SK-N-SH (cell line): ENCODE measurements at regions of chr17 and their contacts with region 1.

Region 1: DNA sequence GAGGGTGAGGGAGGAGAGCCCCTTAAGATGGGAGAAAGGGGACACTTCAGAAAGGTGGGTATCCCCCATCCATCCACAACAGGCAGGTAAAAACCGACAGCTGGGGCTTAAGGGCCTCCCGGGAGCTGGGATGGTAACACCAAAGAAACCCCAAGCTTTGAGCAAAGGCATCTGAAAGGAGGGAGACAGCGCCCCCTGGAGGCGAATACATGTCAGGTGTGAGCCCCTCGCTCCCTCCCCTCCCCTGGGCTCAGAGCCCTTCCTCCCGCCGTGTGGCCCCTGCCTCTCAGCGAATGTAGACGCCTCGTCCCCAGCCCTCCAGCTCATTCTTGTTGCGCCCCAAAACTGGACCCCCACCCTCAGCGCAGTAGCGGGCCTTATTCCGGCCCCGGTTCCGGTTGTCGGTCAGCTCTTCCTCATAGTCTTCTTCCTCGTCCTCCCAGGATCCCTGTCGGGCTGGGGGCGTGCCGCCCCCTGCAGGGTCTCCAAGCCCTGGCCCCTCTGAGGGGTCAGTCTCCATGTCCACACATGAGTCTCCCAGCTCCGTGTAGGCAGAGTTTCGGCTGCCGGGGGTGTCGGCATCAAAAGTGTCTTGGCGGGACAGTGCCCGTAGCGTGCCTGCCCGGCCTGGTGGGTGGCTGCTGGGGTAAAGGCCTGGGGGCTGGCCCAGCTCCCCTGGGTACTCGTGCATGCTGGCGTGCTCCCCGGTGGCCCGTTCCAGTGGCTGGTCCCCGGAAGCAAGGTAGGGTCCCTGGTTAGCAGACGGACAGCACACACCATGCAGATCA is 9.1 kb upstream of the ARL5C start:
- DNase-seq: peak; percentile 93
- H3K4me3 ChIP-seq: no peak overlapping the region
- H3K27ac ChIP-seq: no peak overlapping the region
- H3K4me1 ChIP-seq: no peaks in the 10 kb centered on the region; a peak in 1 of 4 replicates
- H3K27me3 ChIP-seq: no peaks in the 10 kb centered on the region
- CTCF ChIP-seq: peak; percentile 85
- EP300 ChIP-seq: no peak
- RAD21 ChIP-seq: peak; percentile 67

Region 2: GRCh38 chr17:39134878-39135277 is 40.2 kb before region 1 on chr17:
- CTCF ChIA-PET with region 1: no interaction called
- POLR2A ChIA-PET with region 1: no interaction called
- DNase-seq: no peak
- H3K4me3 ChIP-seq: no peak overlapping the region
- H3K27ac ChIP-seq: no peak overlapping the region
- H3K4me1 ChIP-seq: peaks cover 0 to 3% of the 10 kb centered on the region in 2 experiments; a peak in 1 of 4 replicates
- H3K27me3 ChIP-seq: no peaks in the 10 kb centered on the region
- CTCF ChIP-seq: no peak
- EP300 ChIP-seq: no peak
- RAD21 ChIP-seq: no peak

Region 3: GRCh38 chr17:39164675-39165143 is 10.4 kb before region 1 on chr17:
- CTCF ChIA-PET with region 1: interaction called, 108 read pairs
- POLR2A ChIA-PET with region 1: interaction called, 6 read pairs
- DNase-seq: peak; percentile 98
- H3K4me3 ChIP-seq: peak overlapping the region; percentile 50 to 62
- H3K27ac ChIP-seq: no peak overlapping the region
- H3K4me1 ChIP-seq: peaks cover 0 to 3% of the 10 kb centered on the region in 2 experiments; a peak in 2 of 4 replicates
- H3K27me3 ChIP-seq: no peaks in the 10 kb centered on the region
- CTCF ChIP-seq: peak; percentile 78
- EP300 ChIP-seq: no peak
- RAD21 ChIP-seq: peak; percentile 35; the same call in 1 of the 2 replicates

Region 4: DNA sequence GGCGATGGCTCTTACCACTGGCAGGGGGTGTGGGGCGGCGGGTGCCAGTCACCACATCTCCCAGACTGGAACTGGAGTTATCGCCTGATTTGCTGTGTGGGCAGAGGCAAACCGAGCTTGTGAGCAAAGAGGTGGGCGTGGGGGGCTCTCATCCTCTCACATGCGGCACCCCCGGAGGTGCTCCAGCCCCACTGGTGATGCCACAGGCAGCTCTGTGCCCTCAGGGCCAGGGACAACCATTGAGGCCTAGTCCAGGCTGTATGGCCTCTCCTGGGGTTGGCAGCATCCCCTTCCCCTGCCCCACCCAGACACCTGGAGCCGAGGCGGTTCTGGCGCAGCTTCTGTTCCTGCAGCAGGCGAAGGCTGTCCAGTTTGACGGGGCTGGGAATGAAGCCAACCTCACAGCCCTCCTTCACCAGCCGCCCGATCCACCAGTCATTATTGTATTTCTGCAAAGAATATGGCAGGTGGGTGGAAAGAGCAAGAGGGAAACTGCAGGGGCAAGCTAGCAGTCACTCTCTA is 11.4 kb after region 1 on chr17:
- CTCF ChIA-PET with region 1: interaction called, 96 read pairs
- POLR2A ChIA-PET with region 1: interaction called, 3 read pairs
- DNase-seq: no peak
- H3K4me3 ChIP-seq: no peak overlapping the region
- H3K27ac ChIP-seq: no peak overlapping the region
- H3K4me1 ChIP-seq: no peaks in the 10 kb centered on the region
- H3K27me3 ChIP-seq: no peaks in the 10 kb centered on the region
- CTCF ChIP-seq: no peak
- EP300 ChIP-seq: no peak
- RAD21 ChIP-seq: no peak

Region 5: GRCh38 chr17:39199820-39200069 is 24.6 kb after region 1 on chr17:
- CTCF ChIA-PET with region 1: interaction called, 96 read pairs
- POLR2A ChIA-PET with region 1: no interaction called
- DNase-seq: peak; percentile 91
- H3K4me3 ChIP-seq: peak overlapping the region; percentile 75 to 93
- H3K27ac ChIP-seq: peak overlapping the region; percentile 94 to 99
- H3K4me1 ChIP-seq: peaks cover 25 to 42% of the 10 kb centered on the region in 2 experiments; a peak in 2 of 4 replicates
- H3K27me3 ChIP-seq: no peaks in the 10 kb centered on the region
- CTCF ChIP-seq: no peak
- EP300 ChIP-seq: no peak
- RAD21 ChIP-seq: no peak

Region 6: DNA sequence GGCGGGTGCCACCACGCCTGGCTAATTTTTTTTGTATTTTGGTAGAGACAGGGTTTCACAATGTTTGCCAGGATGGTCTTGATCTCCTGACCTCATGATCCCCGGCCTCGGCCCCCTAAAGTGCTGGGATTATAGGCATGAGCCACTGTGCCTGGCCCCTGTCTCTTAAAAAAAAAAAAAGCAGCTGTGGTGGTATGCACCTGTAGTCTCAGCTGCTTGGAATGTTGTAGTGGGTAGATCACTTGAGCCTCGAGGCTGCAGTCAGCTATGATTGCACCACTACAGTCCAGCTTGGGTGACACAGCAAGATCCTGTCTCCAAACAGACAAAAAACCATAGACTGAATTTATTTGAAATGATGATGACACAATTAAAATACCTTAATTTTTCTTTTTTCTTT is 310.5 kb after region 1 on chr17:
- CTCF ChIA-PET with region 1: no interaction called
- POLR2A ChIA-PET with region 1: no interaction called
- DNase-seq: no peak
- H3K4me3 ChIP-seq: no peak overlapping the region
- H3K27ac ChIP-seq: peak overlapping the region in 1 of 2 experiments; percentile 50; a peak in 2 of 4 replicates
- H3K4me1 ChIP-seq: peaks cover 0 to 4% of the 10 kb centered on the region in 2 experiments; a peak in 1 of 4 replicates
- H3K27me3 ChIP-seq: no peaks in the 10 kb centered on the region
- CTCF ChIP-seq: no peak
- EP300 ChIP-seq: no peak; a peak in 1 of 4 replicates
- RAD21 ChIP-seq: no peak